ENCODE measurements at regions of chr1 and their contacts with region 1.

Region 1: GRCh38 chr1:112706908-112707663 is at the start of gene RHOC:
- DNase-seq: peak; percentile 93
- CTCF ChIP-seq: peak; percentile 94

Region 2: GRCh38 chr1:112390775-112391602 is 316.1 kb before region 1 on chr1:
- in situ Hi-C with region 1: loop called (anchors 5 kb)
- DNase-seq: peak; percentile 86
- CTCF ChIP-seq: peak; percentile 85

Region 3: GRCh38 chr1:112501810-112502641 is 205.1 kb before region 1 on chr1:
- in situ Hi-C with region 1: loop called (anchors 10 kb)
- DNase-seq: peak; percentile 75
- CTCF ChIP-seq: peak; percentile 82

Region 4: DNA sequence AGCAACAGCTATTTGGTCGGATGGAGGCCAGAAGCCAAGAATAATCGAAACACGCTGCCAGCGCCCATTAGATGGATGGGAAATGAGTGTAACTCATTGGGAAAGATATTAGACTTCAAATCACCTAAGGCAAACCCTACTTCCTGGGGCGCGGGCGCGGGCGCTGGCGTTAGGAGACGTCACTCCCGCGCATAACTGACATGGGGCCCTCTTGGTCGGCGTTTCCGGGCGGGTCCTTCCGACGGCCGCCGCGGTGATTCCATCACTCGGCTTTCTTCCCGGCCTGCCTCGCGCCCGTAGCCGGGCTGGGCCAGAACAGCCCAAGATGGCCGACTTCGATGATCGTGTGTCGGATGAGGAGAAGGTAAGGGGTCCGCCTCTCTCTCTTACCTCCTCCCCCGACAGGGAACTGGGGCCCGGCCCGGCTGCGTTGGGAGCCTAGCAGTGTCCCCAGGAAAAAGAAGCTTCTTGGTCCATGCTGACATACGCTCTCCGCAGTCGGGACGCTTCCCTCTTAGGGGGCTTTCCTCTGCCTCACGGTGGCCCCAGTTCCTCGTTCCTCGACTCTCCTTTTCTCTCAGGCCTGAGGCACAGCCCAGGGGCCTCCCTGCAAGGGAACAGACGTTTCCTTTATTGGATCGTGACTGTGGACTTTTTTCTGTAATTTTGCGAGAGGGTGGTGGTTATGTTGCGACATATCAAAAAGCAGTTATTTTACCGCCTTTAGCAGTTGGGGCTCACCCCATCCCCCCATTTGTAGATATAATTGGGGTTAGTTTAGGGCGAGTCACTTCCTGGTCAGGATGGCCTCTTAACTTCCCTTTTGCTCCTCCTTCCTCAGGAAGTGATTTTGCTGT is 87.3 kb before region 1 on chr1 and contains the start of gene CAPZA1:
- in situ Hi-C with region 1: loop called (anchors 5 kb)
- DNase-seq: peak; percentile 90
- CTCF ChIP-seq: no peak

Region 5: DNA sequence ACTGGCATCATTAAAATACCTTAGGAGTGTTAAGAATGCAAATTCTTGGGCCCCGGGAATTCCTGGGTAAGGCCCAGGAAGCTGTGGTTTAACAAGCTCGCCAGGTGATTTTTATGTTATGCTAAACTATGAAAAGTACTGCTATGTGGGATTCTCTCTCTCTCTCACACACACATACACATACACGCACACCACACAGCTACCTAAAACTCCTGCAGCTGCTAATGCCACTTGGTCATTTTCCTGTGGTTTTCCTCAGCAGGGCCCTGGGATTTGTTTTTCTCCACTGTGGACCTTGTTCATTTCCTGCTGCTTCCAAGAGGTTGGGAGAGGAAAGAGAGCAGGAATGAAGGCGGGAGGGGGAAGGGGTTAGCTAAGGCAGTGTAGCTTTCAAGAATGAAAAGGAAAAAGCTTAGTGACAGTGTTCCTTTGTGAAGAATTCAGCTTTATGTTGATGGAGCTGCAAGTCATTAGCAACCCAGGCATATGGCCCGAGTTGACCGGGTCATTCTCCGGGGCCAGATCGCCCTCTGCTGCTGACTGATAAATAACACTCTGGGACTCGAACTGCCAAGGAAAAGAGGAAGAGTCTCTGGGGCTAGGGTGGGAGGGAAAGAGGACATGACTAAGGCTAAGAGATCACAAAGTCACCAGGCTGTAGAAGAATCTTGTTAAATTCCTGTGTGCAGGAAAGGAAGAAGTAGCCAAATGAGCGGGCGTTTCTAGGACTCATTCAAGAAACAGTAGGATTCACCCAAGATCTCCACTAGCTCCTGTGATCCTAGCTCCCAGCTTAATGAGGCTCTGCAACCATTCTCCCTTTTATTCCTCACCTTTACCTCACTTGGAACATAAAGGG is 335.4 kb after region 1 on chr1:
- in situ Hi-C with region 1: loop called (anchors 25 kb)
- DNase-seq: peak; percentile 77
- CTCF ChIP-seq: peak; percentile 63